Activated CD4-positive, alpha-beta T cell treated with anti-CD3 and anti-CD28 coated beads for 36 hours (primary cell): ENCODE measurements at regions of chr2 and their contacts with region 1.

Region 1: DNA sequence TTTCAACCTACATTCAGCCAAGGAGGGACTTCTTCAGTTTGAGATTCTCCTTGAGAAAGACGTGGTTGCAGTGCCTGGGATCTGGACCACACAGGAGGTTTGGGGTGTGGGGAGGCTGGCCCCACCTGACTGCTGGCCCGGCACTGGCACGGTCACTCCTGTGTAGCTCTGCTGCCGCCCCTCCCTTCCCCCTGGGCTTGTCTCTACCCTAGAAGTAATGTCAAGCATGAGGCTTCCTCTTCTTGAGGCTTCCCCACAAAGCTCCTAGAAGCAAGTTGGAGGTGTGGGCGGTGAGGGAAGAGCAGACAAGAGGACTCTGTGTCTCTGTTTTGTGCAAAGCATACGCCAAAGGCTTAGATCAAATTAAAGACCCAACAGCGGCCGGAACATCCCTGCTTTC is 8.7 kb downstream of the KLHL29 start:
- DNase-seq: no peak
- ATAC-seq: no peak
- H3K4me3 Mint-ChIP-seq: no peak overlapping the region
- H3K27ac Mint-ChIP-seq: no peak overlapping the region
- H3K4me1 Mint-ChIP-seq: peaks cover 27% of the 10 kb centered on the region
- H3K27me3 Mint-ChIP-seq: peaks cover 34% of the 10 kb centered on the region

Region 2: DNA sequence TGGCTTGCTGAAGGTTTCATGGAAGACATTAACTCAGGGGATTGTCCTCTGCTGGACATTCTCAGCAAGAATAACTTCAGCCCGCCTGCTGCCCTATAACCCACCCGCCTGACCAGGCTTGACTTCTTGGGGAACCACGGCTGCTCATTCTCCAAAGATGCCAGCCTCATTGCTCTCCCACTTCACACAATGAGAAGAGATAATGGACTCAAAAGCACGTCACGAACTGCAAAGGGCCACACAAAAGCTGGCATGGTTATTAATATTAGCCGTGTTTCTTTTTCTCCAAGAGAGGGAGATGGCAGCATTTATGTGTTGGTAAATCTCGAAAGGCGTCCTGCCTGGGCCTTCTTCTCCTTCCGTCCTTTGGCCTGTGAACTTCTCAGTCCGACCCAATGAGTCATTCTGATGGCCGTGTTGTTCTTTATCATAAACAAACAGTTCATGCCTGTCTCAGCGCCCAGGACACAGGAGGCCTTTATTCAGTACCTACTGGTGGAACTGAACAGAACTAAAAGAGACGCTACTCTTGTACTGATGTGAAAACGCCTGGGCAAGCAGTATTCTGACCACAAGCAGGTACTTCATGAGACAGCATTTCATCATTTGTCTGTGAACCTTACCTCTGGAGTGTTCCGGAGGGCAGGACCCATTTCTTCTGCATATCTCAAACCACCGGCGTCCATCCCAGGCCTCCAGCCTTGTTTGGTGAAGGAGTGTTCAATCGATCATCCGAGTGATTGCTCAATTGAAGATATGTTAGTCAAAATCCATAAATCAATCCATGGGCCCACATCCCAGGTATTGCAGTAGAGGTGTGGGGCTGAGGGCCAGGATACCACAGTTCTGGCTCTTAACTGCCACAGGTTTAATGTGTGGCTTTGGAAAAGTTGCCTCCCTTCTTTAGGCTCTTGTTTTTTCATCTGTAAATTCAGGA is 33.8 kb before region 1 on chr2:
- CTCF ChIA-PET with region 1: no interaction called
- POLR2A ChIA-PET with region 1: no interaction called
- intact Hi-C with region 1: loop called in 1 of 2 experiments (anchors 1 kb)
- DNase-seq: no peak
- ATAC-seq: no peak
- H3K4me3 Mint-ChIP-seq: no peak overlapping the region
- H3K27ac Mint-ChIP-seq: no peak overlapping the region
- H3K4me1 Mint-ChIP-seq: no peaks in the 10 kb centered on the region
- H3K27me3 Mint-ChIP-seq: peaks cover 21% of the 10 kb centered on the region

Region 3: GRCh38 chr2:23445450-23445868 is 51.7 kb after region 1 on chr2:
- CTCF ChIA-PET with region 1: no interaction called
- POLR2A ChIA-PET with region 1: no interaction called
- intact Hi-C with region 1: no loop called
- DNase-seq: no peak
- ATAC-seq: peak; percentile 39
- H3K4me3 Mint-ChIP-seq: no peak overlapping the region
- H3K27ac Mint-ChIP-seq: no peak overlapping the region
- H3K4me1 Mint-ChIP-seq: no peaks in the 10 kb centered on the region
- H3K27me3 Mint-ChIP-seq: peaks cover 2% of the 10 kb centered on the region